ENCODE measurements at regions of chr22 and their contacts with region 1.

Region 1: DNA sequence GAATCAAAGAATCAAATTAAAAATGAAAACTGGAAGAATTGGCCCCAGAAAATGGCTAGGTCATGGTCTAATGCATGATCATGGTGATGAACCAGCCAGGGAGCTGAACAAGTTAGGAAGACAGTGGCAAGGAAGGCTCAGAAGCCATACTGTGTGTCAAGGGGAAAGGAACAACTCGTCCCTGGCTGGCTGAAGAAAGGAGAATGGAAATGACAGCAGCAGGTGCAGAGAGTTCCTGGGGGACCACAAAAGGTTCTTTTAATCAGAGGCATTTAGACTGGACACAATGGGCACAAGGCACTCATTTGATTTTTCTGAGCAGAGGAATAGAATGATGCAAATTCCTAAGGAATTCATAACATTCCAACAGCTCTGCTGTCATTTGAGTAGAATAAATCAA is 209.9 kb downstream of the LARGE1 start:
- DNase-seq: no peak

Region 2: DNA sequence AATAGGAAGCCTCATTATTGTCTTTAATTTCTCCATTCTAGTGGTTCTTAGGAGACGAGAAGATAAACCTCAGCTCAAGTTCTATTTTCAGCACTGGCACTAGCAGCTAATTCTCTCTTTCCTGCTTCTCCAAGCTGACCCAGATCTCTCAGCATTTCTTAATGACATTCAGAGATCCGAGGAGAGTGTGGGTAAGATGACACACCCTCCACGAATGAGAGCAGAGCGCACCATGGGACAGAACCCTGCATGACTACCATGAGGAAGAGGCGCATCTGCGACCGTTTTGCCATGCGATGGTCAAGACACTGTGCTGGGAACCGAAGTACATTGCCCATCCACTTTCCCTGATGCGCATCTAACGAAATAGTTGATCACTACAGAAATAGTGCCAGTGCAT is 31.8 kb before region 1 on chr22:
- intact Hi-C with region 1: loop called (anchors 5 kb)
- DNase-seq: no peak

Measured in cardiac septum (tissue), 1 donor.